Calu3 (cell line): ENCODE measurements at regions of chr9 and their contacts with region 1.

Region 1: GRCh38 chr9:87502436-87503221 is 5.0 kb downstream of the DAPK1 start:
- DNase-seq: peak; percentile 39
- H3K4me3 Mint-ChIP-seq: peak overlapping the region; percentile 49
- H3K27ac Mint-ChIP-seq: peak overlapping the region; percentile 77
- H3K4me1 Mint-ChIP-seq: peaks cover 48% of the 10 kb centered on the region
- H3K27me3 Mint-ChIP-seq: no peaks in the 10 kb centered on the region
- CTCF ChIP-seq: no peak

Region 2: GRCh38 chr9:87662808-87663528 is 160.3 kb after region 1 on chr9:
- CTCF ChIA-PET with region 1: no interaction called
- intact Hi-C with region 1: loop called (anchors 5 kb)
- DNase-seq: peak; percentile 87
- H3K4me3 Mint-ChIP-seq: no peak overlapping the region
- H3K27ac Mint-ChIP-seq: peak overlapping the region; percentile 47
- H3K4me1 Mint-ChIP-seq: peaks cover 22% of the 10 kb centered on the region
- H3K27me3 Mint-ChIP-seq: no peaks in the 10 kb centered on the region
- CTCF ChIP-seq: peak; percentile 64